ENCODE measurements at regions of chr7 and their contacts with region 1.

Region 1: DNA sequence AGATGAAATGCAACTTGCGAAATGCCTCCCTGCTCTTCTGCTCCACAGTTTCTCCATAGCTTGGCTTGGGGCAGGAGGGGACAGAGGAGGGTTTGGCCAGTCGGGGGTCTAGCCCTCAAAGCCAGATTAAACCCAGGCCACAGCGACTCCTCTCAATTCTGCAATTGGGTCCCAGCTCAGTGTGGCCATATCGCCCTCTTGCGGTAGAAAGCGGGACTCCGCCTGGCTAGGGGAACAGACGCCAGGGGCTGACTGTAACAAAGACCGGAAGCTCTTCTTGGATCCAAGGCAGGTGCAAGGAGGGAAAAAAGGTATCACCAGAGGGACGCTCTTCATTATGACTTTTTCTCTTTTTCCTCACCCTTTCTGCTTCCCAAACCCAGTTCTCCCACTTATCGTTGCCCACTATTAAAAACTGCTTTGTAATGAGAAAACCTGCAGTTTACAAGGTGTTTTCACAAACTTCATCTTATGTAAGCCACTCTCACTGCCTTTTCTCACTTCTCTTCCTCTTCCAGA is 36.6 kb upstream of the TNPO3 start:
- DNase-seq: peak; percentile 89
- ATAC-seq: peak; percentile 80

Region 2: DNA sequence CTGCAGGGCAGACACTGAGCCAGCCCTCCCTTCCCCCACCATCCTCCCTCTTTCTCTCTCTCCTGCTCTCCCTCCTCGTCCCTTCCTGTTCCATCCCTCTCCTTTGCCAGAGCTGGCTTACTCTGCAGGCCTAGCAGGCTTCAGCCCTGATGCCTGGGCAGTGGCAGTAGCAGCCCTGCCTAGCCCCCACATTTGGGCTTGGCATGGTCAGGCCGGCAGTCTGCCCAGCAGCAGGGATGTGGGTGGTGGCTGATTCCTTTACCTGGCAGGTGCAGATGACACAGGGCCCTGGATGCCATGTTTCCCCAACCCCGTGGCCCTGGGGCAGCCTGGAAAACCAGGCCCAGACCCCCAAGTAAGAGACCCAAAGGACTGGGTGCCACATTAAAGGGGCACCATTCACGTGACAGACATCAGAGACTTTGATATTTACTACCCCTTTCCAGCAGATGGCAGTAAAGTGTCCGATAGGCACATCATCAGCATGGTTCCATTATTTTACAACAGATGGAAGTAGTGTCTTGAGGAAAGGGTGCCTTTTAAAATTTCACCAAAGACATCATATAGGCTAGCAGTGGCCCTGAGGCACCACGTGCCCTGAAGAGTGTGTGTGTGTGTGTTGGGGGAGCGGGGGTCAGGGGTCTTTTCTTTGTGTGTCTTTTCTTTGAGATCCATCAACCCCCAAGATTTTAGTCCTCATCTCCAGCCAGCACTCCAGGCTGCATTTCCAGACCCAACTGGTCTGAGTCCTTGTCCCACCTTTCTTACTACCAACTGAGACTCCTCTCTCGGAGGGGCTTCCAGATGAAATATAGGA is 187.0 kb before region 1 on chr7:
- intact Hi-C with region 1: loop called (anchors 10 kb)
- DNase-seq: peak; percentile 35
- ATAC-seq: peak; percentile 29

Measured in sciatic nerve (tissue), 2 donors.